WTC11 (cell line): ENCODE measurements at regions of chr9 and their contacts with region 1.

Region 1: GRCh38 chr9:101449140-101449721 is 13.7 kb upstream of the ALDOB start:
- DNase-seq: peak; percentile 91
- ATAC-seq: peak; percentile 98
- H3K4me3 Mint-ChIP-seq: peak overlapping the region; percentile 64
- H3K27ac Mint-ChIP-seq: no peak overlapping the region
- H3K4me1 Mint-ChIP-seq: peaks cover 14% of the 10 kb centered on the region
- H3K27me3 Mint-ChIP-seq: no peaks in the 10 kb centered on the region; the same call in none of the 2 replicates
- CTCF ChIP-seq: peak; percentile 44; the same call in 1 of the 2 replicates

Region 2: DNA sequence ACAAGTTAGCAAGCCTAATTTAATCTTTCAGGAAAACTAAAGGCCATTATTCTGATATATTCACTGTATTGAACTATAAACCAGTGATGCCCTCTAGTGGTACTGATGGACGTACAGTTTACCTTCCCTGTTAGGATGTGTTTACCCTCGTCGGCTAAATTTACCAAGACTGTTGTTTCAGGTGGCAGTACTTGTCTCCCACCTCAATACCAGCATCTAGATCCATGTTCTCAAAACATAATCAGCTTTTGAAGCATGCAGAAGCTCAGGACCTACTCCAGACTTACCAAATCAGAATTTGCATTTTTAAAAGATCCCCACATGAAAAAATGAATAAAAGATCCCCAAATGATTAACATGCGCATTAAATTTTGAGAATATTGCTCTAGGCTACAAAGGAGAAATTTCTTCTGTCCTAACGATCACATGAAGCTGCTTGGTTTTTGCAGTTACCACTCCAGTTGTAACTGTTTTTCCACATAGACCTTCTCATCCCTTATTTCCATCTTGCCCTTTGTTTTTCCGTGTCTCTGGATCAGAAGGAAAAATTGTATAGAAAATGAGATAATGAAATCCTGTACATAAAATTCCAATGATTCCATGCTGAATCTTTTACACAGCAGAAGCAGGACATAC is 61.2 kb before region 1 on chr9:
- CTCF ChIA-PET with region 1: interaction called, 12 read pairs
- POLR2A ChIA-PET with region 1: no interaction called
- DNase-seq: no peak
- ATAC-seq: peak; percentile 94
- H3K4me3 Mint-ChIP-seq: no peak overlapping the region
- H3K27ac Mint-ChIP-seq: peak overlapping the region; percentile 93
- H3K4me1 Mint-ChIP-seq: peaks cover 28% of the 10 kb centered on the region
- H3K27me3 Mint-ChIP-seq: no peaks in the 10 kb centered on the region
- CTCF ChIP-seq: peak; percentile 32

Region 3: DNA sequence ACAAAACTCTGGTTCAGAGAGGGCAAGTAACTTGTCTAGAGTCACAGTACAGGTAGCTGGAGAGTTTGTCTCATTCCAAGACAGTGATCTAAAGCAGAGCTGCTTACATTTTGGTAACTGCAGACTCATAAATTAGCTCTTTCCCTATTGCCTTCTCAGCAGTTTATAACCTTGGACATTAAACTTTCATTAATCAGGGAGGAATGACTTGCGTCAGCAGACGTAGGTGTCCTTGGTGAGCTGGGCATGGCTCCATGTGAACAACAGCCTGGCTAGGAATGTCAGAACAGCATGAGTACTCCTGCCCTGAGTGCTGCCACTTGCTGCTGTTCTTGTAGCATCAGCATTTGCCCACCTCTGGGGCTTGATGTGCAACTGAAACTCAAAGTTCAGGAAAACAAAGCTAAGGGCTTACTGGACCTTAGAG is 11.4 kb before region 1 on chr9:
- CTCF ChIA-PET with region 1: interaction called, 14 read pairs
- POLR2A ChIA-PET with region 1: no interaction called
- DNase-seq: no peak
- ATAC-seq: no peak
- H3K4me3 Mint-ChIP-seq: no peak overlapping the region
- H3K27ac Mint-ChIP-seq: no peak overlapping the region
- H3K4me1 Mint-ChIP-seq: no peaks in the 10 kb centered on the region
- H3K27me3 Mint-ChIP-seq: no peaks in the 10 kb centered on the region
- CTCF ChIP-seq: no peak

Region 4: GRCh38 chr9:101480386-101480785 is 31.2 kb after region 1 on chr9:
- CTCF ChIA-PET with region 1: interaction called, 37 read pairs
- POLR2A ChIA-PET with region 1: no interaction called
- DNase-seq: no peak
- ATAC-seq: no peak
- H3K4me3 Mint-ChIP-seq: no peak overlapping the region
- H3K27ac Mint-ChIP-seq: peak overlapping the region; percentile 0; the same call in 1 of the 2 replicates
- H3K4me1 Mint-ChIP-seq: peaks cover 35% of the 10 kb centered on the region
- H3K27me3 Mint-ChIP-seq: peaks cover under 1% of the 10 kb centered on the region; the same call in 1 of the 2 replicates
- CTCF ChIP-seq: no peak

Region 5: GRCh38 chr9:101514071-101514470 is 64.8 kb after region 1 on chr9:
- CTCF ChIA-PET with region 1: interaction called, 10 read pairs
- POLR2A ChIA-PET with region 1: no interaction called
- DNase-seq: no peak
- ATAC-seq: peak; percentile 9
- H3K4me3 Mint-ChIP-seq: no peak overlapping the region
- H3K27ac Mint-ChIP-seq: no peak overlapping the region
- H3K4me1 Mint-ChIP-seq: peaks cover 39% of the 10 kb centered on the region
- H3K27me3 Mint-ChIP-seq: no peaks in the 10 kb centered on the region
- CTCF ChIP-seq: no peak

Region 6: GRCh38 chr9:101530077-101530711 is 81.0 kb after region 1 on chr9:
- CTCF ChIA-PET with region 1: interaction called, 55 read pairs
- POLR2A ChIA-PET with region 1: interaction called, 7 read pairs
- DNase-seq: peak; percentile 73
- ATAC-seq: peak; percentile 43
- H3K4me3 Mint-ChIP-seq: no peak overlapping the region
- H3K27ac Mint-ChIP-seq: no peak overlapping the region
- H3K4me1 Mint-ChIP-seq: peaks cover 12% of the 10 kb centered on the region
- H3K27me3 Mint-ChIP-seq: no peaks in the 10 kb centered on the region
- CTCF ChIP-seq: peak; percentile 61

Region 7: DNA sequence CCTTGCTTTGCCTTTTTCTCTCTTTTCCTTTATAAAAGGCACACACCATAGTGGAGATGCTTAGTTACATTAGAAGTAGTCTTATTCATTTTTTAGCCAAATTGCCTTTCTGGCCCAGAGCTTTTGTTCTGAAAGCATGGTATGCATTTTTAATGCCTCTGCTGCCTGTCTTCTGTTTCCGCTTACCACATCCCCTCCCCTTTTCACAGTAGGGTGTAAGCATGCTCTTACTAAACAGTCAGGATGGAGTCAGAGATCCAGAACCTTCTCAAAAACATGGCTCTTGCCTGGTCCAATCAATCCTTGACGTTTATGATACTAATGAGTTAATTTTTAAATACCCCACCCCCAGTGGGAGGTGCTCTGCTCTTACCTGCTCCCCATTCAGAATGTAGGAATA is 123.1 kb after region 1 on chr9:
- CTCF ChIA-PET with region 1: interaction called, 11 read pairs
- POLR2A ChIA-PET with region 1: no interaction called
- DNase-seq: no peak
- ATAC-seq: peak; percentile 67
- H3K4me3 Mint-ChIP-seq: no peak overlapping the region
- H3K27ac Mint-ChIP-seq: peak overlapping the region; percentile 43
- H3K4me1 Mint-ChIP-seq: peaks cover 36% of the 10 kb centered on the region
- H3K27me3 Mint-ChIP-seq: no peaks in the 10 kb centered on the region
- CTCF ChIP-seq: no peak